ENCODE measurements at regions of chrX and their contacts with region 1.

Region 1: DNA sequence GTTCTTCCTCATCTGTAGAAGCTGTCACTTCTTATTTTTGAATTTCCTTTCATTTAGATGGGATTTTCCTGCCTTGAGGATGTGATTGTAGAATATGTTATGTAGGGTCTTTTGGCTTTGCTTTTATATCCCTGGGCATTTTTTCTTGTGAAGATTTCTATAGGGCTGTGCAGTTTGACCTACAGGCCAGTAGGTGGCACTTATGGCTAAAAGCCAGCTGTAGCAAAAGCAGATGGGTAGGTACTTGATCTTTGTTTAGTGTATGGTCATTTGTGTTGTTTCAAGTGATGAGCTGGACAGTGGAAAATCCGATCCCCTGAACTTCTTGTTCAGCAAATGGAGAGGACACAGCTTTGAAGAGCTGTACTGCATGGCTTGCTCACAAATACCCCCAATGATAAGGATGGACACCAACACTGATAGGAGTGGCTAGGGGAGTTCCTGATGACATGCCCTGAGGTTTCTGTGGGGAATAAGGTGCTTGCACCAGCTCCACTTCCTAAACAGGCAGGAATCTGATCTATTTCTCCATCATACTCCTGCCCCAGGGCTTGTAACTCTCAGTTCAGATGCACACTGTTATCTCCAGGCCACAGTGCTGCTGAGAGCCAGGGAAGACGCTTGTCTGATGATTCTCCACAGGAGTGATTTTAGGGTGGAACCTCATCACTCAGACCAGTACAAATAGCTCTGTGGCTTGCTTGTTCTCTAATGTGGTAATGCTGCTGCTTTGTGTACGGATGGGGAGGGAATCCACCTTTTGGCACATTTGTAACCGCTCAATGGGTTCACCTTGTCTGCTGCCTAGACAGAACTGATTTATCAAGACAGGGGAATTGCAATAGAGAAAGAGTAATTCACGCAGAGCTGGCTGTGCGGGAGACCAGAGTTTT is 417.1 kb upstream of the MAGEB16 start:
- H3K4me3 Mint-ChIP-seq: no peak overlapping the region
- H3K27ac Mint-ChIP-seq: no peak overlapping the region
- H3K4me1 Mint-ChIP-seq: no peaks in the 10 kb centered on the region
- H3K27me3 Mint-ChIP-seq: no peaks in the 10 kb centered on the region

Region 2: GRCh38 chrX:35726176-35726575 is 345.1 kb after region 1 on chrX:
- intact Hi-C with region 1: loop called (anchors 10 kb)
- H3K4me3 Mint-ChIP-seq: no peak overlapping the region
- H3K27ac Mint-ChIP-seq: no peak overlapping the region
- H3K4me1 Mint-ChIP-seq: no peaks in the 10 kb centered on the region
- H3K27me3 Mint-ChIP-seq: peaks cover 3% of the 10 kb centered on the region

Measured in dendritic cell treated with granulocyte-macrophage colony-stimulating factor and Interleukin-4, amounts not matched to agents 40 ng/mL and 50 ng/mL, for 4 days (primary cell).